ENCODE measurements at regions of chr1 and their contacts with region 1.

Region 1: DNA sequence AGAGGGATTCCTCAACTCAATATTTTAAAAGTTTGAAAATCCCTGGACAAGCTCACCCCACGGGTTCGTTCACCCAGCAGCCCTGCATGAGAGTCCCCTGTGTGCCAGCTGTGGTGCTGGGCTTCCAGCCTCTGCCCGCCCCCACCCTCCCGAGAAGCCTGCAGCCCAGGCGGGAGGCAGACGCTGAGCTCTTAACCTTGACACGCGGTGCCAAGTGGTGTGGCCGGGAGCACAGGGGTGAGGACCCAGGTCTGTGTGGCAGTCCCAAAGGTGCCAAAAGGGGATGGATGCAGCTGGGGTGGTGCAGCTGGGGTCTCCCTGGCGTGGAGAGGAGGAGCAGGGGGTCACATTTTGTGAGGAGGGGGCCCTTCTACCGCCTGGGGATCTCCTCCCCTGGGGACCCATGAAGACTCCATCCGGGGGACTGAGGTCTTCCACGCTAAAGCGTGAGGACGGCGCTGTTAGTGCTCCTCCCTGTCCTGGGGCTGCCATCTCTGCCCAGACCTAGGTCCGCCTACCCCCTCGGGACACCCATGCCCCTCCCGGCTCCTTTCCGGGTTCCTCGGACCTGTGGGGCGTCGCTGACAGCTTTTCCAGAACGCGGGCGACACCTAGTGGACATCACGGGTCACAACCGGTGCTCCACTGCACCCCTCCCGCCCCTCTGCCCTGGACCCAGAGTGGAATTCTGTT is 12.9 kb downstream of the PLA2G2F start:
- DNase-seq: peak; percentile 65 to 97 (median 82)

Region 2: GRCh38 chr1:19918057-19918456 is 234.0 kb before region 1 on chr1:
- intact Hi-C with region 1: loop called (anchors 1 kb)
- DNase-seq: peak; percentile 53 to 96 (median 86)

Region 3: DNA sequence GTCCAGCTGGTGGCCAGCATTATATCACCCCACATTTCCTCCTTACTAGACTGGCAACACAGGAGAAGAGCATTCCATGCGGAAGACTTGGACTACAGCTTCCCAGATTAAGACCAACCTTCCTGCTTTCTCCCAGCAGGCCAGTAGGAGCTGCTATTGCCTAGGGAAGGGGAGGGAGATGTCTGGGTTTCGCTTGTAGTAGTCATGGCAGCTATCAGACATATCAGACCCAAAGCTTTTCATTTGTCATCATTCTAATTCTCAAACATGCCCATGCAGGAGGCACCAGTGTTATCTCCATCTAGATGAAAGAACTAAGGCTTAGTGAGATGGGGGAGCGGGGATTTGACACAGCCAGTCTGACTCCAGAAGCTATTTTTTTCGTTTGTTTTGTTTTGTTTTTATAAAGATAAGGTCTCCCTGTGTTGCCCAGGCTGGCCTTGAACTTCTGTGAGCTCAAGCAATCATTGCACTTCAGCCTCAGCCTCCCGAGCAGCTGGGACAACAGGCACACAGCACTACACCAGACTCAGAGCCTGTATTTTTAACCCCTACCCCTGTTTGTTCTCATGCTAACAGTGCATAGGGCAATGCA is 177.1 kb before region 1 on chr1:
- intact Hi-C with region 1: loop called (anchors 10 kb)
- DNase-seq: no peak

Region 4: GRCh38 chr1:20100632-20101355 is 51.3 kb before region 1 on chr1:
- intact Hi-C with region 1: loop called (anchors 5 kb)
- DNase-seq: peak in 4 of 10 donors; percentile 12 to 39 (median 30)